Common myeloid progenitor, CD34-positive (primary cell): ENCODE measurements at regions of chr3 and their contacts with region 1.

Region 1: GRCh38 chr3:17852217-17852616 is 109.8 kb upstream of the TBC1D5 start:
- DNase-seq: no peak
- H3K4me3 ChIP-seq: no peak overlapping the region
- H3K27ac ChIP-seq: no peak overlapping the region
- H3K4me1 ChIP-seq: peaks cover 0 to 4% (median 0%) of the 10 kb centered on the region in 4 experiments
- H3K27me3 ChIP-seq: no peaks in the 10 kb centered on the region

Region 2: DNA sequence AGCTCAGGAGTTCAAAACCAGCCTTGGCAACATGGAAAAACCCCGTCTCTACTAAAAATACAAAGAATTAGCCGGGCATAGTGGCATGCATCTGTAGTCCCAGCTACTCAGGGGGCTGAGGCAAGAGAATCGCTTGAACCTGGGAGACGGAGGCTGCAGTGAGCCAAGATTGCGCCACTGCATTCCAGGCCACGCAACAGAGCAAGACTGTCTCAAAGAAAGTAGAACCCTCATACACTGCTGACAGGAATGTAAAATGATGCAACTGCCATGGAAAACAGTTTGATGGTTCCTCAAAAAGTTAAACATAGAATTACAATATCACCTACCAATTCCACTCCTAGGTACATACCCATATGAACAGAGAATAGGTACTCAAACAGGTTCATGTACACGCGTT is 268.7 kb before region 1 on chr3:
- CTCF ChIA-PET with region 1: no interaction called
- POLR2A ChIA-PET with region 1: interaction called, 12 read pairs
- DNase-seq: no peak
- H3K4me3 ChIP-seq: no peak overlapping the region
- H3K27ac ChIP-seq: no peak overlapping the region
- H3K4me1 ChIP-seq: peaks cover 7 to 26% (median 12%) of the 10 kb centered on the region in 4 experiments
- H3K27me3 ChIP-seq: no peaks in the 10 kb centered on the region